Left colon (tissue), 2 donors: ENCODE measurements at regions of chr9 and their contacts with region 1.

Region 1: GRCh38 chr9:101311758-101312420 is 72.9 kb downstream of the BAAT start:
- DNase-seq: no peak
- ATAC-seq: peak; percentile 76

Region 2: DNA sequence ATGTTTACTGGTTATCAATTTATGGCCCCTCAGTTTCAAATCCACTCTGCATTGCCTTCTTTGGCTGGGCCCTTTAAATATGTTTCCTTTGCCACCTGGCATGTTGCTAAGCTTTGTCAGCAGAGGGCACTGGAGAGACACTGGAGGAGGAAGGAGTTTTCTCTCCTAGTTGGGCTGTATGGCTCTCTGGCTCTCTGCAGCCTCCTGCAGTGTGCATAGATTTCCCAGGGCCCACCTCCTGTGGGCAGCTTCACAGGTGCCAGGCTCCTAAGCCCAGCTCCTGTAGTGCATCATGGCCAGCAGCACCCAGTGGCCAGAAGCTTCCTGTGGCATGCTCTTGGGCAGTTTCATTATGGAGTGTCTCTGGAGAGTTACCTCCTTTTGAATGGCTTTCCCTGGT is 710.7 kb before region 1 on chr9:
- intact Hi-C with region 1: loop called in 1 of 2 experiments (anchors 10 kb)
- DNase-seq: peak; percentile 36 to 48
- ATAC-seq: peak; percentile 60

Region 3: DNA sequence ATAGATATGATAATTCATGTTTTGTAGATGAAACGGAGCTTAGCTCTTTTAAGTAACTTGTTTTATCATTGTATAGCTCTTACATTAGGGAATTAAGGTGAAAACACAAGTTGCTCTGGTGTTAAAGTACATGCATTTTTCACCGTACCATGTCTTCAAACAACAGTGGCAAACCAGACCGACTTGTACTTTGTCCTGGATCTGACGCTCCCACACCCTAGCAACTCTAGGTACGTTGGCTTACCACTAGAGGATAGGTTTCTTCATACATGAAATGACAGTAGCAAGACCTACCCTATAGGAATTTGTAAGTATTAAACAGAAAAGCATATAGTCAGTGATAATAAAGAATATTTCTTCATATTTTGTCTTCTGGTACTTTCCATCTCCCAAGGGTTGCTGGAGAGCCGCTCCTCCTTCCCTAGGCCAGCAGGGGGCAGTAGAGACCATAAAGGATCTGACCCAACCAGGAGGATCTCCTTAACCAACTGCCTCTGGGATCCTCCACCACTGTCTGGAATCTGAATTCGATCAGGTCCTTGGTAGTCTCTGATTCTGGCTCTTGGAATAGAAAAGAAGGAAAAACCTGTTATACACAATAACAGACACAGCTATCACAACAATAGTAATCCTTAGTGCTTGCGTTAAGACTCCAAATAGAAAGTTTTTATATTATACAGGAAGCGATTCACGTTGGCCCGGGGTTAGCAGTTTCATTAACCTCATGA is 597.4 kb before region 1 on chr9:
- intact Hi-C with region 1: loop called in 1 of 2 experiments (anchors 5 kb)
- DNase-seq: peak; percentile 28 to 60
- ATAC-seq: peak; percentile 66